Panc1 (cell line): ENCODE measurements at regions of chr1 and their contacts with region 1.

Region 1: GRCh38 chr1:204806943-204807687 is 63.5 kb upstream of the NFASC start:
- DNase-seq: peak; percentile 74
- ATAC-seq: peak; percentile 98
- H3K4me3 ChIP-seq: peak overlapping the region; percentile 44 to 56
- H3K27ac ChIP-seq: peak overlapping the region; percentile 37; the same call in 1 of the 2 replicates
- H3K4me1 ChIP-seq: 0 out of 2 replicates have a peak, but pooled peaks cover 3% of the 10 kb centered on the region
- H3K27me3 ChIP-seq: peaks cover 7% of the 10 kb centered on the region
- CTCF ChIP-seq: peak; percentile 99

Region 2: DNA sequence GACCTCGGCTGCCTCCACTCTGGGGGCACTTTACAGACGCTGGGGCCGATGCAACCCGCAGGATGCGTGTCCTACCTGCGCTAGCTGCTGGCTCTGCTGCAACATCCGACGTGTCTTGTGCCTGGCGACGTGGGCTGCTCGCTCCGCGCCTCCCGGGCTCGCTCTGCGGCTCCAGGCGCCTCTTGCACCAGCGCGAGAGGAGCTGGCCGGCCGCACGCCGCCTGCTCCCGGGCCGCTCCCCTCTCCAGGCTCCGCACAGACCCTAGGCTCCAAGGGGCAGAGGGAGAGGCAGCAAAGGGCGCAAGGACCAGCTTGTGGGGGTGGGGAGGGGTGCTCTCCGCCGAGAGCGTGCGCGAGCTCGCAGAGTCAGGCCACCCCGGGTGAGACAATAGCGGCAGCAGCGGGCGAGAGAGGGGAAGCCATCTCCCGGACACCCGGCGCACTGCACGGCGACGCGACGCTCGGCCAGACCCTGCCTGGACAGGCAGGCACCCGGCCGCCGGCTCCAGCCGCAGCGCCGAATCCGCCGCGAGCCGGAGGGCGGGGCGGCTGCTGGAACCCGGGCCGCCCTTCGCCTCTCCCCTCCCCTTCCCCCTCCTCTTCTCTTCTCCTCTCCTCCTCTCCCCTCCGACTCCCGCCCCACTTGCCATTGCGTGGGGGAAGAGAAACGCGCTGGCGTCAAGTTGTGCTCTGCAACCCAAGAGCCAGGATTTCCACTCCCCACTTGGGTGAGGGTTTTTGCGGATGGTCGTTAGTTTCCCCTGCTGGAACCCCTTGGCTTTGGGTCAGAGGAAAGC is 312.6 kb before region 1 on chr1 and contains the start of gene PIK3C2B:
- CTCF ChIA-PET with region 1: interaction called, 14 read pairs
- POLR2A ChIA-PET with region 1: no interaction called
- in situ Hi-C with region 1: no loop called
- intact Hi-C with region 1: no loop called
- DNase-seq: no peak
- ATAC-seq: peak; percentile 97
- H3K4me3 ChIP-seq: peak within 1 kb of the TSS; percentile 80 to 91
- H3K27ac ChIP-seq: peak within 1 kb of the TSS; percentile 83
- H3K4me1 ChIP-seq: peaks cover 19% of the 10 kb centered on the region
- H3K27me3 ChIP-seq: no peaks in the 10 kb centered on the region
- CTCF ChIP-seq: peak; percentile 69
- total RNA-seq, gene PIK3C2B: 19.1 TPM

Region 3: GRCh38 chr1:204565617-204566582 is 241.2 kb before region 1 on chr1:
- CTCF ChIA-PET with region 1: interaction called, 61 read pairs
- POLR2A ChIA-PET with region 1: no interaction called
- in situ Hi-C with region 1: no loop called
- intact Hi-C with region 1: loop called (anchors 1 kb)
- DNase-seq: peak; percentile 61
- ATAC-seq: peak; percentile 83
- H3K4me3 ChIP-seq: no peak overlapping the region
- H3K27ac ChIP-seq: peak overlapping the region; percentile 41; the same call in 1 of the 2 replicates
- H3K4me1 ChIP-seq: peaks cover 15% of the 10 kb centered on the region
- H3K27me3 ChIP-seq: no peaks in the 10 kb centered on the region
- CTCF ChIP-seq: peak; percentile 79

Region 4: GRCh38 chr1:204819495-204819894 is 12.4 kb after region 1 on chr1:
- CTCF ChIA-PET with region 1: interaction called, 10 read pairs
- POLR2A ChIA-PET with region 1: no interaction called
- in situ Hi-C with region 1: no loop called
- intact Hi-C with region 1: no loop called
- DNase-seq: no peak
- ATAC-seq: no peak
- H3K4me3 ChIP-seq: no peak overlapping the region
- H3K27ac ChIP-seq: no peak overlapping the region
- H3K4me1 ChIP-seq: no peaks in the 10 kb centered on the region
- H3K27me3 ChIP-seq: peaks cover 17% of the 10 kb centered on the region
- CTCF ChIP-seq: no peak

Region 5: GRCh38 chr1:205061665-205062069 is 254.6 kb after region 1 on chr1:
- CTCF ChIA-PET with region 1: interaction called, 6 read pairs
- POLR2A ChIA-PET with region 1: no interaction called
- in situ Hi-C with region 1: no loop called
- intact Hi-C with region 1: loop called (anchors 10 kb)
- DNase-seq: peak; percentile 36
- ATAC-seq: peak; percentile 76
- H3K4me3 ChIP-seq: no peak overlapping the region
- H3K27ac ChIP-seq: no peak overlapping the region
- H3K4me1 ChIP-seq: no peaks in the 10 kb centered on the region; the same call in 1 of the 2 replicates
- H3K27me3 ChIP-seq: no peaks in the 10 kb centered on the region
- CTCF ChIP-seq: peak; percentile 94